Endothelial cell of umbilical vein (primary cell): ENCODE measurements at regions of chr1 and their contacts with region 1.

Region 1: DNA sequence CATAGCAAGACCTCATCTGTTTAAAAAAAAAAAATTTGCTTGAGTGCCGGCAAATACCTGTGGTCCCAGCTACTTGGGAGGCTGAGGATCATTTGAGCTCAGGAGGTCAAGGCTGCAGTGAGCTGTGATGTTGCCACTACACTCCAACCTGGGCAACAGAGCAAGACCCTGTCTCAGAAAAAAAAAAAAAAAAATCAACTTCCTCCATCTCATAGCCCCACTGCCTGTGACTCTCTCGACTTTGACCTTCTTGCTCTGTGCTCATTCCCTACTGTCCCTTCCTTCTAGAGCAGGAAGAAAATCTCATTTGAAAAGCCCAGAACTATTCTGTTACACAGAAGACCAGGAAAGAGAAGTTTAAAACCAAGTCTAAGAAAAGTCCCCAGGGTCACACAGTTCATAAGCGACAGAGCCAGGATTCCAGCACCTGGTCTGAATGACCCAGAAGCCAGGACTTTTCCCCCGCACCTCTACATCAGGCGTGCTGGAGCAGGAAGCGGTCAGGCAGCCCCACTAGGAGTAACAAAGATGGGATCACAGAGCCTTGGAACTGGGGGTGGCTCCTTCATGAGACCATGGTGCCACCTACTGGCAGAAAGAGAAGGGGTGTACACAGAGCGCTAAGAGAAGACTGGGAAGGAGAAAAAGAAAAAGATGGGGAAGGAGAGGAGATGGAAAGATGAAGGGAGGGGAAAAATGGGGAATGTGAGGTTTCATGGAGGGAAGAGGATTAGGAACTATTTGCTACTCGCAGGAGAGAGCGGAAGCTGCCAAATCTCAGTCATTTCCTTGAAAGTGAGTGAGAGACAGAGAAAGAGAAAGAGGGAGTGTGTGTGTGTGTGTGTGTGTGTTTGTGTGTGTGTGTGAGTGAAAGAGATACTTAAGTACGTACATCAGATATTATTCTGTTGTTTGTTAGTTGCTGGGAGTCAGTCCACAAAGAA is 3.1 kb upstream of the P3R3URF start:
- DNase-seq: peak; percentile 77
- H3K4me3 ChIP-seq: no peak overlapping the region
- H3K27ac ChIP-seq: no peak overlapping the region
- H3K4me1 ChIP-seq: peaks cover 27% of the 10 kb centered on the region
- H3K27me3 ChIP-seq: no peaks in the 10 kb centered on the region
- CTCF ChIP-seq: peak; percentile 81 to 82
- POLR2A ChIP-seq: no peak

Region 2: GRCh38 chr1:45793942-45794586 is 385.3 kb before region 1 on chr1:
- CTCF ChIA-PET with region 1: no interaction called
- POLR2A ChIA-PET with region 1: no interaction called
- dilution Hi-C with region 1: no loop called
- intact Hi-C with region 1: no loop called
- DNase-seq: no peak
- H3K4me3 ChIP-seq: no peak overlapping the region
- H3K27ac ChIP-seq: no peak overlapping the region
- H3K4me1 ChIP-seq: no peaks in the 10 kb centered on the region
- H3K27me3 ChIP-seq: no peaks in the 10 kb centered on the region
- CTCF ChIP-seq: no peak
- POLR2A ChIP-seq: no peak

Region 3: GRCh38 chr1:45884700-45885099 is 294.7 kb before region 1 on chr1:
- CTCF ChIA-PET with region 1: no interaction called
- POLR2A ChIA-PET with region 1: no interaction called
- dilution Hi-C with region 1: no loop called
- intact Hi-C with region 1: loop called (anchors 2 kb)
- DNase-seq: no peak
- H3K4me3 ChIP-seq: no peak overlapping the region
- H3K27ac ChIP-seq: no peak overlapping the region
- H3K4me1 ChIP-seq: no peaks in the 10 kb centered on the region
- H3K27me3 ChIP-seq: no peaks in the 10 kb centered on the region
- CTCF ChIP-seq: no peak
- POLR2A ChIP-seq: no peak

Region 4: DNA sequence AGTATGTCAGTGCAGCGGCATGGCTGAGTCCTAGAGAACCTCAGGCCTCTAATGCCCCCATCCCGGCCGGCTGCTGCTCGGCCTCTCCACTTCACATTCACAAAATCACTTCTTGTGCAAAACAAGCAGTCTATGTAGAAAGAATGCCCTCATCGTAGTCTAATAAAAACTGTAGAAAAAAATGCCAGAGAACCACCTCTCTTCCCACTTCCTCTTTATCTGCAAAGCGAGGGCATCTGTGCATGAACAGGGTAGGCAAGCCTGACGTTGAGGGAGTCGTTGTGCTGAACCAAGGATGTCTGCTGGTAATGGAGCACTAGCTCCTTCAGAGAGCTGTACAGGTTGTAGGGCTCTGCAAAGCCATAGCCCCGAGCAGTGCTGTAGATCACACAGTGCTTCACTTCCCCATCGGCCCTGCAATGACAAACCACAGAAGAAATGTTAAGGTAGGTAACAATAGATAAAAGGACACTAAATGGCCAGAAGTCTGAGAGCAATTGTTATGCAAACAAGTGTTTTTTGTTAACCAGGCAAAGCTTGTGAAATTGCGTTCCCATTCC is 135.9 kb before region 1 on chr1:
- CTCF ChIA-PET with region 1: interaction called, 134 read pairs
- POLR2A ChIA-PET with region 1: no interaction called
- dilution Hi-C with region 1: loop called (anchors 25 kb)
- intact Hi-C with region 1: no loop called
- DNase-seq: no peak
- H3K4me3 ChIP-seq: no peak overlapping the region
- H3K27ac ChIP-seq: no peak overlapping the region
- H3K4me1 ChIP-seq: peaks cover 4% of the 10 kb centered on the region
- H3K27me3 ChIP-seq: no peaks in the 10 kb centered on the region
- CTCF ChIP-seq: no peak
- POLR2A ChIP-seq: no peak

Region 5: DNA sequence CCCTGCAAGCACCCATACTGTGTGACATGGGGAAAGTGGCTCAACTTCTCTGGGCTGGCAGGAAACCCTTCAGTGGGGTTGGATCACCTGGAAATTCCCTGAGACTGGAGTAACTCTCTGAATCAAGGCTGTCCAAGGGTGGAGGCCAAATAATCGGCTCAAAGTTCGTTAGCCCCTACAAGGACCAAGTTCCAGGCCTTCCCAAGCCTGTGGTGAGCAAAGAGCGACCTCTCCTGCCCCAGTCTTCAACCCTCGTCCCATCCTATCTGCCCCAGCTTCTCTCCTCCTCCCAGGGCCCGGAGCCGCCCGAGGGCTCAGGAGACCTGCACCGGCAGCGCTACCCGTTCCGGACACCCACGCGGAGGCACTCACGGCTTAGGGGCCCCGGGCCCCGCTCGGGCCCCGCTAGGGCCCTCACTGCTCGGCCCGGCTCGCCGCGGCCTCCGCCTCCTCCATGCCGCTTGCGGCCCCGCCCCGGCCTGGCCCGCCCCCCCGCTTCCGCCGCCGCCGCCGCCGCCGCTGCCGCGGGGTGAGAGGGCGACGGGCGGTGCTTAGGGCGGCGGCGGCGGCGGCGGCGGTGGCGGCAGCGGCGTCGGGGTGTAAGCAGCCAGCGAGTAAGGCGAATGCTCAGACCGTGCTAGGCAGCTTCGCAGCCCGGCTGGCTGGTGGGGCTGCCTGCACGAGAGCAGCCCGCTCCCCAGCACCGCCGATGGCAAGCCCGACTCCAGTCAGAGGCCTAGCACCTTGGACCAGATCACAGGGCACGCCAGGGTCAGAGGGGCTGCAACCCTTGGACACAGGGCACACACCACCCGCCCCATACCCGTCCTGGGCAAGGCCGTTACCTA is 18.8 kb after region 1 on chr1 and contains the start of gene POMGNT1:
- CTCF ChIA-PET with region 1: interaction called, 7 read pairs
- POLR2A ChIA-PET with region 1: no interaction called
- dilution Hi-C with region 1: no loop called
- intact Hi-C with region 1: loop called (anchors 1 kb)
- DNase-seq: peak; percentile 63
- H3K4me3 ChIP-seq: peak within 1 kb of the TSS; percentile 26 to 88 (median 64)
- H3K27ac ChIP-seq: peak within 1 kb of the TSS; percentile 39
- H3K4me1 ChIP-seq: peaks cover 8% of the 10 kb centered on the region
- H3K27me3 ChIP-seq: no peaks in the 10 kb centered on the region
- CTCF ChIP-seq: peak in 1 of 2 donors; percentile 19
- POLR2A ChIP-seq: peak; percentile 88
- total RNA-seq, gene POMGNT1: 64.4 and 66.9 TPM in 2 replicates

Region 6: GRCh38 chr1:46340404-46341221 is 161.2 kb after region 1 on chr1 and contains the start of gene NSUN4:
- CTCF ChIA-PET with region 1: no interaction called
- POLR2A ChIA-PET with region 1: no interaction called
- dilution Hi-C with region 1: no loop called
- intact Hi-C with region 1: loop called (anchors 5 kb)
- DNase-seq: peak; percentile 92
- H3K4me3 ChIP-seq: peak within 1 kb of the TSS; percentile 70 to 91 (median 89)
- H3K27ac ChIP-seq: peak within 1 kb of the TSS; percentile 88
- H3K4me1 ChIP-seq: peaks cover 10% of the 10 kb centered on the region
- H3K27me3 ChIP-seq: no peaks in the 10 kb centered on the region
- CTCF ChIP-seq: peak; percentile 69 to 79
- POLR2A ChIP-seq: peak; percentile 84
- total RNA-seq, gene NSUN4: 21.6 and 22.4 TPM in 2 replicates

Region 7: DNA sequence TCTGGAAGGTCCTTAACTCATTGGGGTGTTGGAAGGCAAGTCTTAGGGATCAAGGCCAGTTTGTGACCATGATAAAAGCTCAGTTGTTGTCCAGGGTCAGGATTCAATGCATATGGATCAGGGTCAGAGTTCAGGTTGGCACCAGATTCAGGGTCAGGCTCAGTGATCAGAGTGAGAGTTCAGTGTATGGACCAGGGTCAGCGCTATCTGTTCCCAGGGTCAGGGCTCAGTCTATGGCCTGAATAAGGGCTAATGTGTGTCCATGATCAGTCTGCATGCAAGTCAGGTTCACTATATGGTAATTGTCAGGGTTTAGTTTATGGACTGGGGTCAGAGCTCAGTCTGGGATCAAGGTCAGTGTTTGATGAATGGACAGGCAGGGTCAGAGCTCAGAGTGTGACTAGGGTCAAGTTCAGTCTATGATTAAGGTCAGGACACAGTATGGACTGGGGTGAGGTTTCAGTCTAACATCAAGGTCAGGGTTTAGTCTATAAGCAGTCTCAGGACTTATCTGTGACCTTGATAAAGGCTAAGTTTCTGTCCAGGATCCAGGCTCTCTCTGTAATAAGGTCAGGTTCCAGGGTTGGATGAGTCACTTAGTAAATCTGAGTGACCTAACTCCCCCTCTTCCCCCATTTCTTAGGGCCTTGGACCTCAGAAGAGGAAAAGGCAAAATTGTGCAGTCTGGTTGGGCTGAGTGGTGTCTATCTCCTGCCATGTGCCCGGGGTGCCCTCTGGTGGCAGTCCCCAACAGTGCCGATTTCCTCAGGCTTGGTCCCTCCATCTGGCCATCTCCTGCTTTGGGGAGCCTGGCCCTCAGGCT is 348.3 kb after region 1 on chr1:
- CTCF ChIA-PET with region 1: no interaction called
- POLR2A ChIA-PET with region 1: no interaction called
- dilution Hi-C with region 1: no loop called
- intact Hi-C with region 1: no loop called
- DNase-seq: peak; percentile 67
- H3K4me3 ChIP-seq: no peak overlapping the region
- H3K27ac ChIP-seq: no peak overlapping the region
- H3K4me1 ChIP-seq: no peaks in the 10 kb centered on the region
- H3K27me3 ChIP-seq: peaks cover 52 to 57% of the 10 kb centered on the region in 2 experiments
- CTCF ChIP-seq: peak; percentile 90 to 95
- POLR2A ChIP-seq: no peak